ENCODE measurements at regions of chr12 and their contacts with region 1.

Region 1: DNA sequence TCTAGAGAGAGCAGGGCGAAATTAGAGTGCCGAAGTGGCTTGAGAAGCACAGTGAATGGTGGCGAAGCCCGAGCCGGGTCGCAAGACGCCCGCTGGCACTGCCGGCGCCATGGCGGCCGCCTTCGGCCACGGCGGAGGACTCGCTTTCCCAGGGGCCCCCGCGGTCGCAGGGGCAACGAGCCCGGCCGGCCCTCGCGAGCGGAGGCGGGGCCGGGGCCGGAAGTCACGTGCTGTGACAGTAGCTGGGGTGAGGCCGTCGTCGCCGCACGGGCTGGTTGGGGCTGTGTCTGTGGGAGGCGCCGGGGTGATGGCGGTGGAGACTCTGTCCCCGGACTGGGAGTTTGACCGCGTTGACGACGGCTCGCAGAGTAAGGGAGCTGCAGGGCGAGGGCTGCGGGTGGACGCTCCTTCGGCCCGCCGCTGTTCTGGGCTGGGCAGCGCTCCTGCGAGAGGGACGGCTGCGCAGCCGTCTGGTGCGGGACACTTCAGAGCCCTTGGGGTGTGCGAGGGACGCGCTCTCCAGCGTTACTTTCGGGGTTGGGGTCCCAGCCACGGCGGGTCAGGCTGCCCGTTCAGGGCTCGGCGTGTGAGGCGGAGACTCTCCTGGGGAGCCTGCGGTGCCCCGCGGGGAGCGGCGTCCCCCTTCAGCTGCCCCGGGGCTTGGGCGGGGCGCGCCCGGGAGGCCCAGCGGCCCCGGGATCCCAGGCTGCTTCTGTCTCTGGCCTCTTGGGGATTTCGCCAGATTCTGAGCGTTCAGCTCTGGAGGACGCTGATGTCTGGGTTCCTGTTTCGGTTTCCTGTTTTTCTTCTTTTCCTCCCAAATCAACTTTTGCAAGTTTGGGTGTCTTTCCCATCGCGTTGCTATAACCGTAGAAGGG is at the start of gene WASHC4:
- DNase-seq: peak; percentile 90 to 92 (median 92)
- H3K4me3 ChIP-seq: peak within 1 kb of the TSS; percentile 72 to 74
- H3K4me3 Mint-ChIP-seq: peak within 1 kb of the TSS; percentile 92 to 98 (median 97)
- H3K27ac ChIP-seq: peak within 1 kb of the TSS; percentile 92
- H3K27ac Mint-ChIP-seq: peak within 1 kb of the TSS; percentile 82 to 98 (median 96)
- H3K4me1 ChIP-seq: peaks cover 42% of the 10 kb centered on the region
- H3K4me1 Mint-ChIP-seq: peaks cover 28 to 49% (median 34%) of the 10 kb centered on the region in 4 donors
- H3K27me3 ChIP-seq: no peaks in the 10 kb centered on the region
- H3K27me3 Mint-ChIP-seq: peaks cover 14 to 19% of the 10 kb centered on the region in 2 donors
- total RNA-seq, gene WASHC4: 71.4 to 75.4 TPM

Region 2: GRCh38 chr12:103840876-103841689 is 1266.7 kb before region 1 on chr12 and contains the start of gene NT5DC3:
- CTCF ChIA-PET with region 1: no interaction called
- POLR2A ChIA-PET with region 1: no interaction called
- intact Hi-C with region 1: loop called (anchors 2 kb)
- DNase-seq: peak; percentile 80 to 90 (median 86)
- H3K4me3 ChIP-seq: peak within 1 kb of the TSS; percentile 44 to 63
- H3K4me3 Mint-ChIP-seq: peak within 1 kb of the TSS; percentile 87 to 97 (median 89)
- H3K27ac ChIP-seq: peak within 1 kb of the TSS; percentile 35
- H3K27ac Mint-ChIP-seq: peak within 1 kb of the TSS; percentile 69 to 90 (median 86)
- H3K4me1 ChIP-seq: peaks cover 14% of the 10 kb centered on the region
- H3K4me1 Mint-ChIP-seq: peaks cover 6 to 26% (median 13%) of the 10 kb centered on the region in 4 donors
- H3K27me3 ChIP-seq: no peaks in the 10 kb centered on the region
- H3K27me3 Mint-ChIP-seq: no peaks in the 10 kb centered on the region
- total RNA-seq, gene NT5DC3: 6.1 to 6.8 TPM

Region 3: DNA sequence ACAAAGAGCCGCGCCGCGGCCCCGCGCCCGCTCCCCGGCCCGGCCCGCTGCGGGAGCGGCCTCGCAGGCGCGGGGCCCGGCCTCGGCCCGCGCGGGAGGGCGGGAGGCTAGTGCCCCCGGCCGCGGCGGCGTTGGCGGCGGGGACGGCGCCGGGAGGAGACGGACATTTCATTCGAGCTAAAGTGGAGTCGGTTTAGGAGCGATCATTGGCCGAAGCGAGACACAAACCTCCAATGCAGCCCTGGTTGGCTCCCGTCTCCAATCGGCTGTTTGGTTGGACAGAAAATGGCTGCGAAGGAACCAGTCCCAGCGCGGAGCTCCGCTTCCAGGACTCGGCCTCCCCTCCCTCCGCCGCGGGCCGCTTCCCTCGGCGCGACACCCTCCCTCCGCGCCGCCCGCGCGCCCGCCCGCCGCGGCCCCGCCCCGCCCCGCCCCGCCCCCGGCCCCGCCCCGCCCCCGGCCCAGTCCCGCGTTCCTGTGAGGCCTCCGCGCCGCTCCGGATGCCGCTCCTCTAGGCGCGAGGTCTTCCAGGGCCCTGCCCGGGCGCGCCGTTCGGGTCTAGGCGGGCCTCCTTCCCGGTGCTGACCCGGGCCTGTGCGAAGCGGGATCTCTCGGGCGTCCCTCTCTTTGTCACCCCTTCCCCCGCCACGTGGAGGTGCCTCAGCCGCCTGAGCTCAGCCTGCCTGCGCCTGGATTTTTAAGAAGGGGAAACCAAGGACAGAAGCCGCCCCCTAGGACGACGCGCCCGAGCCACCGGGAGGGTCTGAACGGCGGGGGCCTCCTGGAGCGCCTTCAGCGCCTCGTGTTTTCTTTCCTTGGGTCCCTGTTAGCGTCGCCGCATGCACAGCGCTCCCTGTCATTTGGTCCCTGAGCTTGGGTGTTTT is 969.6 kb before region 1 on chr12 and contains the start of gene NFYB:
- CTCF ChIA-PET with region 1: no interaction called
- POLR2A ChIA-PET with region 1: no interaction called
- intact Hi-C with region 1: loop called (anchors 1 kb)
- DNase-seq: peak; percentile 95 to 97 (median 95)
- H3K4me3 ChIP-seq: peak within 1 kb of the TSS; percentile 37 to 66
- H3K4me3 Mint-ChIP-seq: peak within 1 kb of the TSS; percentile 90 to 95 (median 94)
- H3K27ac ChIP-seq: peak within 1 kb of the TSS; percentile 75
- H3K27ac Mint-ChIP-seq: peak within 1 kb of the TSS; percentile 85 to 97 (median 92)
- H3K4me1 ChIP-seq: peaks cover 35% of the 10 kb centered on the region
- H3K4me1 Mint-ChIP-seq: peaks cover 12 to 21% (median 16%) of the 10 kb centered on the region in 4 donors
- H3K27me3 ChIP-seq: no peaks in the 10 kb centered on the region
- H3K27me3 Mint-ChIP-seq: peaks cover 0 to 2% of the 10 kb centered on the region in 2 donors
- total RNA-seq, gene NFYB: 29.9 to 32.5 TPM

Region 4: DNA sequence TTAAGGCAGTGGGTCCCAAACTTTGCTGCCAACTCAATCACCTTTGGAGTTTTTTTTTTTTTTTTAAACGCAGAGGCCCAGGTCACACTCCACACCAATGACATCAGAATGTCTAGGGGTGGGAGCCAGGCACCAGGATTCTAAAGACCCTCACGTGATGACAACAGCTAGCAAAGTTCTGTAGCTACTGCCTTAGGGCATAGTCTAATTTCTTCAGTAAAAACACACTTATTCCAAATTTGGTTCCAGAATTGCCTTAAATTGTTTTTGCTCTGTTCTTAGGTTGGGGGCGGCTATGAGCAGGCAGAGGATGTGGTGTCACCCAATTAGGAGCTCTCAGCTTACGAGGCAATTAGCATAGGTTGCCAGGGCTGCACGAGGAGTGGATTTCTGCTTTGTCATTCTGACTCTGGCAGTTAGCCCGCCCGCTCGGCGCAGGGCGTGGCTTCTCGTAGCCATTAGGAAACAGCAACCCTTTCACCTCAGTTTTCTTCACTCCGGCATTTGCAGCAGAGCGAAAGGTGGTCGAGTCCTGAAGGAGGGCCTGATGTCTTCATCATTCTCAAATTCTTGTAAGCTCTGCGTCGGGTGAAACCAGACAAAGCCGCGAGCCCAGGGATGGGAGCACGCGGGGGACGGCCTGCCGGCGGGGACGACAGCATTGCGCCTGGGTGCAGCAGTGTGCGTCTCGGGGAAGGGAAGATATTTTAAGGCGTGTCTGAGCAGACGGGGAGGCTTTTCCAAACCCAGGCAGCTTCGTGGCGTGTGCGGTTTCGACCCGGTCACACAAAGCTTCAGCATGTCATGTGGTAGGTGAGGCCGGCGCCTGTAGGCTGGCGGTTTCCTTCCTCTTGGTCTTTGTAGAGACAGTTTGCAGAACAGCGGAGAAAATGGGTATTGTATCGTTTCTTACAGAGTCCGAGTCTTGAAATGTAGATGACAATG is 820.9 kb before region 1 on chr12:
- CTCF ChIA-PET with region 1: no interaction called
- POLR2A ChIA-PET with region 1: no interaction called
- intact Hi-C with region 1: loop called (anchors 5 kb)
- DNase-seq: peak; percentile 87 to 94 (median 88)
- H3K4me3 ChIP-seq: peak overlapping the region; percentile 80 to 96
- H3K4me3 Mint-ChIP-seq: peak overlapping the region; percentile 94 to 100 (median 99)
- H3K27ac ChIP-seq: peak overlapping the region; percentile 82
- H3K27ac Mint-ChIP-seq: peak overlapping the region; percentile 94 to 99 (median 96)
- H3K4me1 ChIP-seq: peaks cover 35% of the 10 kb centered on the region
- H3K4me1 Mint-ChIP-seq: peaks cover 23 to 41% (median 30%) of the 10 kb centered on the region in 4 donors
- H3K27me3 ChIP-seq: no peaks in the 10 kb centered on the region
- H3K27me3 Mint-ChIP-seq: peaks cover 0 to 2% of the 10 kb centered on the region in 2 donors

Region 5: DNA sequence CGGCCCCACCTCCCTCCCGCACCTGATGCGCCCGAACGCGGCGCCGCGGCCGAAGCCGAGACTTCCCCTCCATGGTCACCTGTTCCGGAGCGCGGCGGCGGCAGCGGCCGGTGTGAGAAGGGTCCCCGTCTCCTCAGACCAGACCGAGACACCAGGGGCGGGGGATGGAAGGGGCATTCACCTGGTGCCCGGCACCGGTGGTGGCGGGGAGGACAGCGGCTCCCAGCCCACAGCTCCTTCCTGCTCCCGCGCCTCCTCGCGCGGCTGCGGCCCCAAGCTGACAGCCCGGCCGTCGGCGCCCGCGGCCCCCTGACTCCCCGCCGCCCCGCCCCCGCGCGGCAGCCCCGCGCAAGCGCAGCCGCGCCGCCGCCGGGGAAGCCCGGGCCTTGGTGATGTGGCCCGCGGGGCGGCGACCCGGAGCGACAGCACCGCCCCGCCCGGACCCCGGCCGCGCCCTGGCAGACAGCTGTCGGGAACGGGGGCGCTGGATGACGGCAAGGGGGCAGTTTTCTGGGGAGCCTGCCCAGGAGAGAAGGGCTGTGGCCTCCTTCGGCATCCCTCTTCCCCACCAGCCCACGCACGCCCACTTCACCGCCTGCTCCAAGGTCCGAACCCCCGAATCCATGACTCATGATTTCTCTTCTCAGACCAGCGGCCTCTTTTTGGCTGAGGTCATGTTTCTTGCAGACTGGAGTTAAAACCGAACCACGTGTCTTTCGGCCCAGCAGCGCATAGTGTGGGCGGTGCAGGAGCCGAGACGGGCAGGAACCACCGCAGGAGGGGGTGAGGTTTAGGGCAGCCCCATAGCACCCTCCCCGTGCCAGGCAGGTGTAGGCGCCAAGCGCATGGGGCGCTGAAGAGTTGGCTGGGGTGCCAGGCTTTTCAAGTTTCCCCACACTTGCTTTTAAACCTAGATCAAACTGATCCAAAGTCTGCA is 149.5 kb before region 1 on chr12 and contains the start of gene SLC41A2:
- CTCF ChIA-PET with region 1: no interaction called
- POLR2A ChIA-PET with region 1: no interaction called
- intact Hi-C with region 1: loop called (anchors 1 kb)
- DNase-seq: peak; percentile 77 to 92 (median 81)
- H3K4me3 ChIP-seq: peak within 1 kb of the TSS; percentile 81 to 87
- H3K4me3 Mint-ChIP-seq: peak within 1 kb of the TSS; percentile 94 to 98 (median 97)
- H3K27ac ChIP-seq: peak within 1 kb of the TSS; percentile 68
- H3K27ac Mint-ChIP-seq: peak within 1 kb of the TSS; percentile 90 to 99 (median 96)
- H3K4me1 ChIP-seq: peaks cover 17% of the 10 kb centered on the region
- H3K4me1 Mint-ChIP-seq: peaks cover 13 to 30% (median 21%) of the 10 kb centered on the region in 4 donors
- H3K27me3 ChIP-seq: no peaks in the 10 kb centered on the region
- H3K27me3 Mint-ChIP-seq: peaks cover 0 to 3% of the 10 kb centered on the region in 2 donors
- total RNA-seq, gene SLC41A2: 3.6 to 3.7 TPM

Region 6: GRCh38 chr12:104986022-104986941 is 121.5 kb before region 1 on chr12 and contains the start of gene NOPCHAP1:
- CTCF ChIA-PET with region 1: no interaction called
- POLR2A ChIA-PET with region 1: no interaction called
- intact Hi-C with region 1: loop called (anchors 2 kb)
- DNase-seq: peak; percentile 73 to 84 (median 79)
- H3K4me3 ChIP-seq: peak within 1 kb of the TSS; percentile 68 to 80
- H3K4me3 Mint-ChIP-seq: peak within 1 kb of the TSS; percentile 88 to 94 (median 92)
- H3K27ac ChIP-seq: peak within 1 kb of the TSS; percentile 64
- H3K27ac Mint-ChIP-seq: peak within 1 kb of the TSS; percentile 59 to 94 (median 86)
- H3K4me1 ChIP-seq: peaks cover 28% of the 10 kb centered on the region
- H3K4me1 Mint-ChIP-seq: peaks cover 21 to 43% (median 27%) of the 10 kb centered on the region in 4 donors
- H3K27me3 ChIP-seq: no peaks in the 10 kb centered on the region
- H3K27me3 Mint-ChIP-seq: no peaks in the 10 kb centered on the region
- total RNA-seq, gene NOPCHAP1: 15.7 to 16.2 TPM

Region 7: GRCh38 chr12:105235732-105236476 is 128.2 kb after region 1 on chr12 and contains the start of gene APPL2:
- CTCF ChIA-PET with region 1: no interaction called
- POLR2A ChIA-PET with region 1: interaction called, 9 read pairs
- intact Hi-C with region 1: loop called (anchors 1 kb)
- DNase-seq: peak; percentile 61 to 73 (median 69)
- H3K4me3 ChIP-seq: peak within 1 kb of the TSS; percentile 63 to 74
- H3K4me3 Mint-ChIP-seq: peak within 1 kb of the TSS; percentile 90 to 97 (median 94)
- H3K27ac ChIP-seq: peak within 1 kb of the TSS; percentile 56
- H3K27ac Mint-ChIP-seq: peak within 1 kb of the TSS; percentile 90 to 98 (median 92)
- H3K4me1 ChIP-seq: peaks cover 39% of the 10 kb centered on the region
- H3K4me1 Mint-ChIP-seq: peaks cover 32 to 45% (median 38%) of the 10 kb centered on the region in 4 donors
- H3K27me3 ChIP-seq: no peaks in the 10 kb centered on the region
- H3K27me3 Mint-ChIP-seq: no peaks in the 10 kb centered on the region
- total RNA-seq, gene APPL2: 56.0 to 61.0 TPM